Vagina (tissue), 2 donors: ENCODE measurements at regions of chr15 and their contacts with region 1.

Region 1: DNA sequence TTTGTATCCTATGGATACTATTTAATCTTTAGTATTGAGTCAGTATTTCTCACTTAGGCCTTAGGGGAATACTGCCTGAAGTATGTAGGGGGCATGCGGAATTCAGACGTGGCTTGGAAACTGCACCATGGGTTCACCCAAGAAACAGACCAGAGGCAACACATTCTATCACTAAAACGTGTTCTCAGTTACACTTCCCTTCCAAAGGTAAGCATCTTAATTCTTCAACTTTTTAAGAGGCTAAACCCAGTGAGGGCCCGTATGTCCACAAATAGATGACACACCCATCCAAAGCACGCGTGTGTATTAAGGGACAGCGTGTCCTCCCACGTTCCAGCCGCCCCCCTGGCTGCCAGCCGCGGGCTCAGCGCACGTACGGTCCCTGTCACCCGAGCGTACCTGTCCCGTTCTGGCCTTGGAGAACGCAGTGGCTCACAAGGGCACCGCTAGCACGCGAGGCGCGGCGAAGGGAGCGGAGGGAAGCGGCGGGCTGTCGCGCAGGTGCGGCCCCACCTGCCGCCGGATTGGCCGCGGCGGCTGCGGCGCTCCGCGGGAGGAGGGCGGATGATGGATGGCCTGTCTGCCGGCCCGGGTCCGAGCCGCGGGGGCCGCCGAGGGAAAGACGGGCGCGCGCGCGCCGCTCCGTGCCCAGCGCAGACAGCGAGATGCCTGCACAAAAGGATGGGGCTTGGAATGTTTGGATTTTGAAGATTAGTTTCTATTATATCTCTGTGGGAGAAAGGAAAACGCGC is 1003.9 kb upstream of the NR2F2 start:
- DNase-seq: no peak
- H3K4me3 ChIP-seq: peak overlapping the region; percentile 52 to 65
- H3K27ac ChIP-seq: peak overlapping the region; percentile 90
- H3K4me1 ChIP-seq: no peaks in the 10 kb centered on the region
- H3K27me3 ChIP-seq: no peaks in the 10 kb centered on the region
- CTCF ChIP-seq: no peak
- POLR2A ChIP-seq: no peak

Region 2: DNA sequence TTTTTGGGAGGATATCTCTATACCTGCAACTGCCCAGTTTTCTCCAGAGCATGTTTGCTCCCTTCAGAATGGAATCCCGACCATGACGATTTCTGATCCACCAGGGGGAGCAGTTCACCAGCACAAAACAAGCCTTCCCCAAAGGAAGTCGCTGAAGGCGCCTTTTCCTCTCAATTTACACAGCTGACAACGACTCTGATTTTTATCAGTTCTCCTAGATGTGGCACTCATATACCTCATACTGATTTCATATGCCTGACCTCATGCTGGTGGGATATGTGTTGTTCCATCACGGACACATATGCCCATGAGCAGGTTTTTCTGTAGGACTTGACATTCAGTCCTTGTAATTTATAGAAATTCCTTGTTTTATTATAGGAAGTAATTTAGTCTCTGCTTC is 67.1 kb before region 1 on chr15:
- intact Hi-C with region 1: loop called (anchors 5 kb)
- DNase-seq: no peak
- H3K4me3 ChIP-seq: no peak overlapping the region
- H3K27ac ChIP-seq: peak overlapping the region; percentile 12
- H3K4me1 ChIP-seq: peaks cover 27% of the 10 kb centered on the region
- H3K27me3 ChIP-seq: no peaks in the 10 kb centered on the region
- CTCF ChIP-seq: peak; percentile 81 to 87 (median 82)
- POLR2A ChIP-seq: no peak

Region 3: DNA sequence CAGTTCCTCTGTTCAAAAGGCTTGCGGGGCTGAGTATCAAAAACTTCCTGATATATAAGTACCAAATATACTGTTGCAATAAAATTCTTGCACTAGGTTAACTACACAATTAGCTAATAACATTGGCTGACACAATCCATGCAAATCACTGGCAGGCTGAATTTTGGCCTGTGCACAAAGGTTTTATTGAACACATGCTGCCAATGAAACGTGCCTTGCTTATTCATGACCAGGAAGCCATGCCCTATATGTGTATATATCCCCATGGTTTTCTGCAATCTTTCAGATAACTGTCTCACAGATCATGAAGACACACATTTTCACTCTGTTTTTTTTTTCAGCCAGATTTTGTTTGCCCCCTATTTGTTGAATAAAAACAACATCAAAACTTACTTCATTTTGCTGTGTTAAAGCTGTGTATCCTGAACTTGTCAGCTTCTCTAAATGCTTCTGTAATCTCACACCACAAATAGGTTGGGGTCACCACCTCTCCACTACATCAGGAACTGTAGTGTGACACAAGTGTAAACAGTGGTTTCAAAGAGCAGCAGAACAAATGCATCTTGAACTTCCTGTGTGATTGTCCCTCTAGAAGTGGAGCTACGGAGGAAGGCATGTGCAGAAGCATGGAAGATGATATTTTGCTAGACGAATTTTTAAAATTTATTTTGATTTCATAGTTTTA is 83.2 kb after region 1 on chr15:
- intact Hi-C with region 1: loop called (anchors 10 kb)
- DNase-seq: no peak
- H3K4me3 ChIP-seq: no peak overlapping the region
- H3K27ac ChIP-seq: no peak overlapping the region
- H3K4me1 ChIP-seq: no peaks in the 10 kb centered on the region
- H3K27me3 ChIP-seq: no peaks in the 10 kb centered on the region
- CTCF ChIP-seq: no peak
- POLR2A ChIP-seq: no peak